ENCODE measurements at regions of chr19 and their contacts with region 1.

Region 1: GRCh38 chr19:6239401-6239844 is 40.4 kb downstream of the MLLT1 start:
- DNase-seq: no peak
- H3K4me3 ChIP-seq: no peak overlapping the region
- H3K27ac ChIP-seq: peak overlapping the region in 2 of 4 donors; percentile 22 to 29
- H3K4me1 ChIP-seq: peaks cover 8 to 43% (median 32%) of the 10 kb centered on the region in 4 donors
- H3K27me3 ChIP-seq: no peaks in the 10 kb centered on the region
- CTCF ChIP-seq: no peak
- EP300 ChIP-seq: no peak
- POLR2A ChIP-seq: no peak

Region 2: DNA sequence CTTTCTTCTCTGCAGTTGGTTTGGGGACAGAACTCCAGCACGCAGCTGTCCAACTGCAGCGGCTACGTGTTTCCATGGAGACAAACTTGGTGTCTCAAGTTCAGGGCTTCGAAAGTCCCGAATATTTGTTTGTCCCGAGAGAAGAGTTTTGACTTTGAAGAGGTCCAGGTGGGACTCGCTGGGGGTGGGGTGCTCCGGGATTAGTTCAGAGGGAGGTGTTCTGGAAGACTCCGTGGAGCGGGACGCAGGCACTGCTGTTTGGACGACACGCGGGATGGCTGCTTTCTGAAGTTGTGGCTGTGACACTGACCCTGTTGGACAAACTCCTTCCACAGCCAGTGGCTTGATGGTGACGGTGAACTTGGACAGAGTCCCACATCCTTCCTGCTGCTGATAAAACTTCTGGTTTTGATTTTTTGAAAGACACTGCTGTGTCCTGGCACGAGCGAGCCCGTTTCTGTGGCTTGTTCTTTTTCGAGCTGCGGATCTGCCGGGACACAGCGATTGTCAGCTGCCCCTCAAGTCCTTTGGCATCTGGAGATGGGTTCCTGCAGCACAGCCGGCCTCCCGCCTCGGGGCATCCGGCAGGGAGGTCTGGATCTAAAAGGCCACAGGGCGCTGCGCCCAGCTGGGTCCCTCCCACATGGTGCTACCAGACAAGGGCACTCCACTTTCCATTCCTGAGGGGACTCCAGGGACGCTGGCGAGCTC is 245.6 kb before region 1 on chr19:
- in situ Hi-C with region 1: no loop called
- intact Hi-C with region 1: no loop called
- DNase-seq: no peak
- H3K4me3 ChIP-seq: no peak overlapping the region
- H3K27ac ChIP-seq: peak overlapping the region in 3 of 4 donors; percentile 19 to 65 (median 33)
- H3K4me1 ChIP-seq: peaks cover 0 to 7% (median 1%) of the 10 kb centered on the region in 4 donors
- H3K27me3 ChIP-seq: no peaks in the 10 kb centered on the region
- CTCF ChIP-seq: no peak
- EP300 ChIP-seq: no peak
- POLR2A ChIP-seq: no peak

Region 3: DNA sequence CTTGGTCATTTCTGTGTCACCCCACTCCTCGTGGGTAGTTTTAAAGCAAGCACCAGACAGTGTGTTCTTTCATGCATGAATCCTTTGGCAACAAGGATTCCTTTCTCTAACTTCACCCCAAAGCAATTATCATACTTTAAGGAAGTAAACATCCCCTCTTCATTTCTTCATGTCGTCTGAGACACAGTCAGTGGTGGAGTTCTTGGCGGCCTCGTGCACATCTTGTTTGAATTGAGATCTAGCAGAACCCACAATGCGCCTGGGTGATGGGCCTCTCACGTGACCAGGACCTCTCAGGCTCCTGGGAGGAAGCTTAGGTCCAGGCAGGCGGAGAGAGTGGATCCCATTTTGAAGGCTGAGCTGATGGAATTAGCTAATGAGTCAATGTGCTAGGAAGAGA is 101.4 kb before region 1 on chr19:
- in situ Hi-C with region 1: no loop called
- intact Hi-C with region 1: no loop called
- DNase-seq: no peak
- H3K4me3 ChIP-seq: no peak overlapping the region
- H3K27ac ChIP-seq: no peak overlapping the region
- H3K4me1 ChIP-seq: no peaks in the 10 kb centered on the region
- H3K27me3 ChIP-seq: no peaks in the 10 kb centered on the region
- CTCF ChIP-seq: no peak
- EP300 ChIP-seq: no peak
- POLR2A ChIP-seq: no peak

Region 4: DNA sequence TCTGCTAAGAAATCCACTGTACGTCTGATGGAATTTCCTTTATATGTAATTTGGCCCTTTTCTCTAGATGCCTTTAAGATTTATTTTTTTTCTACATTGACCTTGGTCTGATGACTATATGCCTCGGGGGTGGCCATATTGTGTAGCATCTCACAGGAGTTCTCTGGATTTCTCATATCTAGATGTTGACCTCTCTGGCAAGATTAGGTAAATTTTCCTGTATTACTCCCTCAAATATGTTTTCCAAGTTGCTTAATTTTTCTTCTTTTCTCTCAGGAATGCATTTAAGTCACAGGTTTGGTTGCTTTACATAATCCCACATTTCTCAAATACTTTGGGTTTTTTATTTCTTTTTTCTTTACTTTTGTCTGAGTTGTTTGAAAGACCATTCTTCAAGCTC is 67.9 kb before region 1 on chr19:
- in situ Hi-C with region 1: no loop called
- intact Hi-C with region 1: no loop called
- DNase-seq: no peak
- H3K4me3 ChIP-seq: no peak overlapping the region
- H3K27ac ChIP-seq: no peak overlapping the region
- H3K4me1 ChIP-seq: no peaks in the 10 kb centered on the region
- H3K27me3 ChIP-seq: no peaks in the 10 kb centered on the region
- CTCF ChIP-seq: no peak
- EP300 ChIP-seq: no peak
- POLR2A ChIP-seq: no peak

Region 5: GRCh38 chr19:6228541-6229215 is 10.7 kb before region 1 on chr19:
- in situ Hi-C with region 1: no loop called
- intact Hi-C with region 1: loop called (anchors 2 kb)
- DNase-seq: no peak
- H3K4me3 ChIP-seq: no peak overlapping the region
- H3K27ac ChIP-seq: no peak overlapping the region
- H3K4me1 ChIP-seq: peaks cover 8 to 16% (median 11%) of the 10 kb centered on the region in 4 donors
- H3K27me3 ChIP-seq: no peaks in the 10 kb centered on the region
- CTCF ChIP-seq: no peak
- EP300 ChIP-seq: no peak
- POLR2A ChIP-seq: no peak

Region 6: DNA sequence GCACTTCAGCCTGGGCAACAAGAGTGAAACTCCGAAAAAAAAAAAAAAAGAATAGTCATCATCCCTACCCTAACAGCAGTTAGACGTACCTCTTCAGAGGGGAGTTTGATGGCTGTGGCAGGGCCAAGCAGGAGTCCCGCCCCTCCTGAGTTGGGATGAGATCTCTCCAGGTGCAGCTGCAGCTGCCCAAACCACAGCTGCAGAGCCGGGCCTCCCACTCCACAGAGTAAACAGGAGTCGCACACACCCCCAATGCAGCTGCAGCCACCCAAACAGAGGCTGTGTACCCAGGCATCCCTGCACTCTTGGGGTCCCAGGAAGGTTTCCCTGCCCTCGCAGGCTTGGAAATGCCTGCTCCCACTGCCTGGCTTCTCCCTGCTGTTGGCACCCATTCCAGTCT is 57.8 kb after region 1 on chr19:
- in situ Hi-C with region 1: no loop called
- intact Hi-C with region 1: no loop called
- DNase-seq: no peak
- H3K4me3 ChIP-seq: no peak overlapping the region
- H3K27ac ChIP-seq: no peak overlapping the region
- H3K4me1 ChIP-seq: no peaks in the 10 kb centered on the region
- H3K27me3 ChIP-seq: no peaks in the 10 kb centered on the region
- CTCF ChIP-seq: no peak
- EP300 ChIP-seq: no peak
- POLR2A ChIP-seq: no peak